ENCODE measurements at regions of chr15 and their contacts with region 1.

Region 1: DNA sequence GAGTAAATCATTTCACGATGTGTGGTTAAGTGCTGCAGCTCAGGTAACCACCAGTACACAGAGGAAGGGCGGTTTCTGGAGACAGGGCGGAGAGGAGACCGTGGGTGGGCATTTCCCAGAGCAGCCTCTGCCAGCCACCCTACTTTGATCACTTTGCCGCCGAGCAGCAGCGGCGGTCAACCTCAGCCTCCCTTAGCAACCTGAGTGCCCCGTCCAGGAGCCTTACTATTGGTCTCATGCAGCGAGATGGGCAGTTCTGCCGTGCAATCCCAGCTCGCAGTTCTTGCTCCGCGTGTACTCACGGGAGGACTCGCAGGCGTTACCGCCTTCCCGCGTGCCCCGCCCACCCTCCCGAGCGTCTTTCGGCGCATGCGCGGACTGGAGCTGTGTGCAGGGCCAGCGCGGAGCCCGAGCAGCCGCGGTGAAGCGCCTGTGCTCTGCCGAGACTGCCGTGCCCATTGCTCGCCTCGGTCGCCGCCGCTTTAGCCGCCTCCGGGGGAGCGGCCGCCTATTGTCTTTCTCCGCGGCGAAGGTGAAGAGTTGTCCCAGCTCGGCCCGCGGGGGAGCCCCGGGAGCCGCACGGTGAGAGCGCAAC is at the start of gene AKAP13:
- DNase-seq: peak; percentile 97
- H3K4me3 Mint-ChIP-seq: peak within 1 kb of the TSS; percentile 91
- H3K27ac Mint-ChIP-seq: peak within 1 kb of the TSS; percentile 90
- H3K4me1 Mint-ChIP-seq: peaks cover 51% of the 10 kb centered on the region
- H3K27me3 Mint-ChIP-seq: no peaks in the 10 kb centered on the region
- total RNA-seq, gene AKAP13: 79.4 to 83.2 TPM

Region 2: DNA sequence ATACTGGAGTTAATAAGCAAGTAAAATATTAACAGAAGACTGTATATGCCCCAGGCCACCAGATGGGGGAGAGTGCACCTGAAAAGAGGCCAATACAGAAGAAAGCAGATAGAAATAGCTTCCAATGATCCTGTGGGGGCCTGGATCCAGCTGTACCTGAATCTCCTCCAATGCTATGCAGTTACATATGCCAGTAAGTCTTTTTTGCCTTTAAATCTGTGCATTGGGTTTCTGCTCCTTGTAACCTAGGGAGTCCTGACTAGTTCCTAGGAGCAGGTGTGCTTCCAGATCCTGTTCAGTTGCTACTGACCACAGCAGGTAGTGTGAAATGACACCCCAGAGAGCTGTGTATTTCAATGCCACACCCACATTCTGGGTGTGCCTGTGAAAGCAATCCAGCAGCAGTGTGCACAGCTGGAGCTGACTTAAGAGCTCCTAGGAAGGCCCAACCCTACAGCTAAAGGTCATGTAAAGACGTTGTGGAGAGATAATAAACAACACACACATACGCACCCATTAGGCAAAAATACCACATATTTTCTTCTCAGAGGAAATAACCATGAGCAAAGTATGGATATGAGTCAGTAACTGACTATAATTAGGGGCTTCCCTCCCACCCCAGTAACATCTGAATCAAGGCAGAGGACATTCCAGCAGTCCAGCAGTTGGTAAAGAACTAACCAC is 62.1 kb before region 1 on chr15:
- CTCF ChIA-PET with region 1: interaction called, 7 read pairs
- intact Hi-C with region 1: loop called (anchors 1 kb)
- DNase-seq: peak; percentile 40
- H3K4me3 Mint-ChIP-seq: no peak overlapping the region
- H3K27ac Mint-ChIP-seq: no peak overlapping the region
- H3K4me1 Mint-ChIP-seq: peaks cover 43% of the 10 kb centered on the region
- H3K27me3 Mint-ChIP-seq: no peaks in the 10 kb centered on the region

Region 3: DNA sequence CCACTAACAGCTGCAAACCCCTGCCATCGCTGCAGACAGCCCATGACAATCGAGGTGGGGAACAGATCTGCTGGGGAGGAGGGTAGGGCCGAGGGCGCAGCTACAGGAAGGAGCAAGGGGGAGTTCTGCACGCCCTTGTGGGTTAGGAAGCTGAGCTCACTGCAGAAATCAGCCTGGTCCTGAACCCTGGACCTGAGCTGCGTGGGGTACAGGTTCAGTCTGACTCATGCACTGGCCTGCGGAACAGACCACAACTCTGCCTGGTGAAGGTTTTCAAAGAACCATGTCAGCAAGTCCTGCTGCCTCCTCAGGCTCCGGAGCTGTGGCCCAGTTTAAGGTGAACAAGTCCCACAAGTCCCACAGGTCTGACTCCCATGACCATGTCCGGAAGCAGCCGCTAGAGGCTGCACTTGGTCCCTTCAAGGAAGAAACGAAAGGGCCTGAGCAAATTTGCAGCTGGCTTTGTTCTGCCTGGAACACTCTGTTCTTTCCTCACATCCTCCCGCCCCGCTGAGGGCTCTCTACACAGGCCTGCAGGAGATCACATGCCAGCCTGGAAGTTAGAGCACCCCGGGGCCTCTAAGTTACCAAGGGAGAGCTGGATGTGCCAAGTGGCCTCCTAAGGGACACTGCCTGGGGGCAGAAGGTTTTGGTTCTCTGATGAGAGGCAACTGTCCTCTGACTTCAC is 49.3 kb before region 1 on chr15:
- CTCF ChIA-PET with region 1: interaction called, 8 read pairs
- intact Hi-C with region 1: loop called (anchors 1 kb)
- DNase-seq: peak; percentile 79
- H3K4me3 Mint-ChIP-seq: peak overlapping the region; percentile 85
- H3K27ac Mint-ChIP-seq: peak overlapping the region; percentile 6
- H3K4me1 Mint-ChIP-seq: peaks cover 22% of the 10 kb centered on the region
- H3K27me3 Mint-ChIP-seq: no peaks in the 10 kb centered on the region

Region 4: GRCh38 chr15:85354461-85354860 is 25.9 kb before region 1 on chr15:
- CTCF ChIA-PET with region 1: no interaction called
- intact Hi-C with region 1: loop called (anchors 1 kb)
- DNase-seq: no peak
- H3K4me3 Mint-ChIP-seq: no peak overlapping the region
- H3K27ac Mint-ChIP-seq: no peak overlapping the region
- H3K4me1 Mint-ChIP-seq: peaks cover 11% of the 10 kb centered on the region
- H3K27me3 Mint-ChIP-seq: peaks cover 2% of the 10 kb centered on the region

Region 5: DNA sequence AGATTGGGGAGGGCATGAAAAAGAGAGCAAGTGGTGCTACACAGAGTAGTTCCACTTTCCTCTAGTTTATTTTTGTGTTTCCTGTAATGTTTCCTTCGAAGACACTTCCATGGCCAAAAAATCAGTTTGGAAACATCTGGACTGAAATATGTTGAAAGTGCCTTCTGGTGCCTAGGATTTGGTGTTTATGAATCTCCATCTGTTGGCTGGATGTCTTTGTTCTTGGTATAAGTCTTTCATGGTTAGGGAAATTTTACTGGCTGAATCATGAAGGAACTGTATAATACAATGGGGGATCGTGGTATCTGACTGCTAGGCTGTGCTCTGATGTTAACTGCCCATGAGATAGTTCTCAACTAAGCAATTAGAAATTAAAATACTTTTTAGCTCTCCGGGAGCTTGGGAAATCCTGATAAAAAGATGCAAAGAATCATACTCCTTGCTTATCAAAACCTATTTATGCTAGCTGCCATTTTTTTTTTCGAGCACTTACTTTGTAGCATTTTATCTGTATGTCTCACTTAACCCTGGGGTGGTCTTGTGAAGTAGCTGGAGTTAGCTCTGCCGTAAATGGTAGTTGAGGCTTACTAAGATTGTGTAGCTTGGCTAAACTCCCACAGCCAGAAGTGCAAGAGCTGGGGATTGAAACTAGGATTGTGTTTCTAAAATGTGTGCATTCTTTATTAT is 22.0 kb after region 1 on chr15:
- CTCF ChIA-PET with region 1: interaction called, 13 read pairs
- intact Hi-C with region 1: no loop called
- DNase-seq: no peak
- H3K4me3 Mint-ChIP-seq: peak overlapping the region; percentile 26
- H3K27ac Mint-ChIP-seq: peak overlapping the region; percentile 20
- H3K4me1 Mint-ChIP-seq: peaks cover 77% of the 10 kb centered on the region
- H3K27me3 Mint-ChIP-seq: no peaks in the 10 kb centered on the region

Region 6: DNA sequence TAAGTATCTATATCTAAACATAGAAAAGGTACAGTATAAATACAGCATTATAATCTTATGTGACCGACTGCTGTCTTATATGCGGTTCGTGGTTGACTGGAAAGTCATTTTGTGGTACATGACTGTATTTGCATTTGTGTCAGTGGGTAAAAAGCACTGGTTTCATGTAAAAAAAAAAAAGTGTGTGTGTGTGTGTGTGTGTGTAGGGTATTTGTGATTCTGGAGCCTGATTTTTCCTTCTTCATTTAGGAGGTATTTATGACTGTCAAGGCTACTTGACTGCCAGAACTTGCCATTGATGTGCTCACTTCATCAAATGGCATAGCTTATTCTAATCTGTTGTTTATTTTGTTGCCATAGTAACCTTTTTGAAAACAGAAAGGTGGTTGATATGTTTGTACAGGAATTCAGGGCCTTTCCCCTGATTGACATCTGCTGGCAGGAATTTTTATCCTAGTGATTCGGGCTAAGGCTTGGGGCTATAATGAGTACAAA is 63.3 kb after region 1 on chr15:
- CTCF ChIA-PET with region 1: no interaction called
- intact Hi-C with region 1: loop called (anchors 2 kb)
- DNase-seq: peak; percentile 50
- H3K4me3 Mint-ChIP-seq: no peak overlapping the region
- H3K27ac Mint-ChIP-seq: peak overlapping the region; percentile 19
- H3K4me1 Mint-ChIP-seq: peaks cover 48% of the 10 kb centered on the region
- H3K27me3 Mint-ChIP-seq: no peaks in the 10 kb centered on the region

Measured in activated naive CD4-positive, alpha-beta T cell treated with anti-CD3 and anti-CD28 coated beads for 36 hours (primary cell).